CD4-positive, alpha-beta T cell (primary cell): ENCODE measurements at regions of chr7 and their contacts with region 1.

Region 1: DNA sequence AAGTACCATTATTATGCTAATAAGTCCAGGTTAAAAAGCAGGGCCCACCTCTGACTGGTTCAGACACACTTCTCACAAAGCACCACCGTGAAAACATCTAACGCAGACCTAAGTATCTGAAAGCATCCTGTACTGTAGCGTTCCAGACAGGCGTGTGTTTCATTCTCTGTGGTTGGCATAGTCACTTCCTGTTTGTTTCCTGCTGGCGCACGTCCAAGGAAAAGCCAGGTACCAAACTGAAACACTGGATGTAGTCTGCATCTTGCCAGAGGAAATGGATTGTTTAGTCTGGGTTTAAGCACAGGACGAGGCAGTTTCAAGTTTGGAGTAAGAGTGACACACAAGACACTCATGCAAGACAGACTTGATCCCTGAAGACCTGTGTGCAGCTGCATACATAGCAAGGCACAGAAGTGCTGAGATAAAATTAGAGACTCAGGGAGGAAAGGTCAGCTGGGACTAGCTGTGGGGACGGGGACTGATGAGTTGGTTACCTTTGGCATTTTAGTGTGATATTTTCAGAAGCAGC is 23.3 kb downstream of the BPGM start:
- DNase-seq: peak; percentile 77 to 96 (median 88)
- ATAC-seq: peak; percentile 93
- H3K4me3 ChIP-seq: peak overlapping the region; percentile 24
- H3K4me3 Mint-ChIP-seq: peak overlapping the region; percentile 85
- H3K27ac ChIP-seq: peak overlapping the region; percentile 74 to 87
- H3K27ac Mint-ChIP-seq: peak overlapping the region; percentile 89
- H3K4me1 ChIP-seq: peaks cover 18% of the 10 kb centered on the region
- H3K4me1 Mint-ChIP-seq: peaks cover 61% of the 10 kb centered on the region
- H3K27me3 ChIP-seq: no peaks in the 10 kb centered on the region
- H3K27me3 Mint-ChIP-seq: no peaks in the 10 kb centered on the region
- CTCF ChIP-seq: no peak

Region 2: DNA sequence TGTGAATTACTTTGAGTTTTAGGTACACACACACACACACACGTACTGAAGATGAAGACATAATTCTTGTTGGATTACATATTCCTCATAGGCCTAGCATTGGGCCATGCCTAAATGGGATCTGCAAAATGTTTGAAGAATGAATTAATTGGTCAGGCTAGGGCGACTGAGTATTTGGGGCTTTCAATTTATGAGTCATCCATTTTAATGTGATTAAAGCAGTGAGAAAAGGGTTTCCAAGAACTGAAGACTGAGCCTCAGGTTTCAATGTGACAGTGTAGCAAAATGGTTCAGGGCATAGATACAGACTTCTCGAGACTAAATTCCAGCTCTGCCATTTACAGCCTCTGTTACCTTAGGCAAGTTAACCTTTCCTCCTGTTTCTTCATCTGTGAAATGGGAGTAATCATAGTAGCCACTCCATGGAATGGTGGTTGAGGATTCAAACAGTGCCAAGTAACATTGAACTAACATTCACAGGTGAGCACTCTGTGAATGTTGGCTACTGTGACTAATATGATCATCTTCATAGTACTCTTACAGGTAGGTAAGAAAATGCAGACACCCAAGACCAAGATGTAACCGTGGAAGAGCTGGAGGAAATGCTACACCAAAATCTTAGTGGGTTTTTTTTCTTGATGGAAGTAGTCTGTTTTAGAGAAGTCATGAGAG is 15.7 kb before region 1 on chr7:
- CTCF ChIA-PET with region 1: interaction called, 31 read pairs
- POLR2A ChIA-PET with region 1: interaction called, 105 read pairs
- intact Hi-C with region 1: loop called in 1 of 2 experiments (anchors 2 kb)
- DNase-seq: no peak
- ATAC-seq: no peak
- H3K4me3 ChIP-seq: no peak overlapping the region
- H3K4me3 Mint-ChIP-seq: no peak overlapping the region
- H3K27ac ChIP-seq: no peak overlapping the region
- H3K27ac Mint-ChIP-seq: no peak overlapping the region
- H3K4me1 ChIP-seq: no peaks in the 10 kb centered on the region
- H3K4me1 Mint-ChIP-seq: peaks cover 76% of the 10 kb centered on the region
- H3K27me3 ChIP-seq: no peaks in the 10 kb centered on the region
- H3K27me3 Mint-ChIP-seq: no peaks in the 10 kb centered on the region
- CTCF ChIP-seq: no peak

Region 3: GRCh38 chr7:134710859-134711624 is 41.1 kb after region 1 on chr7:
- CTCF ChIA-PET with region 1: interaction called, 3 read pairs
- POLR2A ChIA-PET with region 1: interaction called, 7 read pairs
- intact Hi-C with region 1: loop called in 1 of 2 experiments (anchors 1 kb)
- DNase-seq: peak; percentile 31 to 88 (median 61)
- ATAC-seq: peak; percentile 94
- H3K4me3 ChIP-seq: no peak overlapping the region
- H3K4me3 Mint-ChIP-seq: peak overlapping the region; percentile 25
- H3K27ac ChIP-seq: peak overlapping the region; percentile 68 to 73
- H3K27ac Mint-ChIP-seq: peak overlapping the region; percentile 84
- H3K4me1 ChIP-seq: peaks cover 13% of the 10 kb centered on the region
- H3K4me1 Mint-ChIP-seq: peaks cover 18% of the 10 kb centered on the region
- H3K27me3 ChIP-seq: no peaks in the 10 kb centered on the region
- H3K27me3 Mint-ChIP-seq: no peaks in the 10 kb centered on the region
- CTCF ChIP-seq: no peak